ENCODE measurements at regions of chr19 and their contacts with region 1.

Region 1: GRCh38 chr19:21505459-21506451 is at the start of gene ZNF429:
- DNase-seq: peak; percentile 68 to 96 (median 90)
- ATAC-seq: peak; percentile 99
- H3K4me3 Mint-ChIP-seq: peak within 1 kb of the TSS; percentile 99 to 100 (median 100)
- H3K27ac Mint-ChIP-seq: peak within 1 kb of the TSS; percentile 96 to 100 (median 100)
- H3K4me1 Mint-ChIP-seq: peaks cover 10 to 54% (median 43%) of the 10 kb centered on the region in 4 donors
- H3K27me3 Mint-ChIP-seq: no peaks in the 10 kb centered on the region
- polyA plus RNA-seq, gene ZNF429: 23.0 to 37.8 (median 34.9) TPM

Region 2: GRCh38 chr19:21328885-21329605 is 176.7 kb before region 1 on chr19 and contains the start of gene ZNF708:
- POLR2A ChIA-PET with region 1: interaction called, 27 read pairs
- DNase-seq: peak; percentile 51 to 85 (median 70)
- ATAC-seq: peak; percentile 94 to 96
- H3K4me3 Mint-ChIP-seq: peak within 1 kb of the TSS; percentile 97 to 99 (median 99)
- H3K27ac Mint-ChIP-seq: peak within 1 kb of the TSS; percentile 98 to 99 (median 99)
- H3K4me1 Mint-ChIP-seq: peaks cover 16 to 50% (median 38%) of the 10 kb centered on the region in 4 donors
- H3K27me3 Mint-ChIP-seq: no peaks in the 10 kb centered on the region
- polyA plus RNA-seq, gene ZNF708: 11.8 to 15.1 (median 14.0) TPM

Region 3: GRCh38 chr19:21492947-21493906 is 12.5 kb before region 1 on chr19:
- POLR2A ChIA-PET with region 1: no interaction called
- DNase-seq: no peak
- ATAC-seq: no peak
- H3K4me3 Mint-ChIP-seq: no peak overlapping the region
- H3K27ac Mint-ChIP-seq: no peak overlapping the region
- H3K4me1 Mint-ChIP-seq: peaks cover 0 to 4% (median 0%) of the 10 kb centered on the region in 4 donors
- H3K27me3 Mint-ChIP-seq: no peaks in the 10 kb centered on the region

Region 4: GRCh38 chr19:21532904-21533303 is 27.1 kb after region 1 on chr19:
- POLR2A ChIA-PET with region 1: no interaction called
- DNase-seq: no peak
- ATAC-seq: no peak
- H3K4me3 Mint-ChIP-seq: no peak overlapping the region
- H3K27ac Mint-ChIP-seq: no peak overlapping the region
- H3K4me1 Mint-ChIP-seq: peaks cover 0 to 2% (median 0%) of the 10 kb centered on the region in 4 donors
- H3K27me3 Mint-ChIP-seq: no peaks in the 10 kb centered on the region

Region 5: GRCh38 chr19:21568816-21569493 is 63.2 kb after region 1 on chr19:
- POLR2A ChIA-PET with region 1: interaction called, 38 read pairs
- DNase-seq: peak; percentile 54 to 95 (median 86)
- ATAC-seq: peak; percentile 97
- H3K4me3 Mint-ChIP-seq: peak overlapping the region; percentile 91 to 100 (median 96)
- H3K27ac Mint-ChIP-seq: peak overlapping the region; percentile 89 to 100 (median 98)
- H3K4me1 Mint-ChIP-seq: peaks cover 20 to 37% (median 28%) of the 10 kb centered on the region in 4 donors
- H3K27me3 Mint-ChIP-seq: no peaks in the 10 kb centered on the region

Region 6: DNA sequence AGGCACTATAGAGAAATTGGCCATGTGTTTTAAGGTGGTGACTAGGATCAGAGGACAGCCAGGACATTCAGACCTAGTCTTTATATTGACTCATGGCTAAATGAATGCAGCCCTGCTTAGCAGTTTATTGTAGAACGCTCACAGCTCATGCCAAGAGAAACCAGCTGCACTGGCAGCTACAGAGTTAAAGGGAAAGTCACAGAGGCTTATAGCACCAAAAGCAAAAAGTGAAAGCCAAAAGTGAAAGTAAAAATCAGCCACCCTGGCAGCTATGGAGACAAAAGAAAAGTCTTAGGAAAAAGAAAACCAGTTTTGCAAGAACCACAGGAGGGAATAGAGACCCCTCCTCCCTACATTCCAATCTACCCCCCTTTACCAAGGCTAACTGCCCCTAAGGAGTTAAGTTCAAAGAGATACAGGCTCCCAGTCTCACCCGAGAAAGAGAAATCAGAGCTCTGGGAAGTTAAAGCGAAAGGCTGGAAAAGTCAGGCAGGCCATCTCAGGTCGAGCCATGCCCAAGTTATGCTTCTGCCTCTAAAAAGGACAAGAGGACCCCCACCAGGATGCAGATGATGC is 98.7 kb after region 1 on chr19:
- POLR2A ChIA-PET with region 1: interaction called, 19 read pairs
- DNase-seq: peak in 4 of 10 donors; percentile 5 to 50 (median 42)
- ATAC-seq: peak; percentile 83 to 85
- H3K4me3 Mint-ChIP-seq: peak overlapping the region; percentile 87 to 97 (median 91)
- H3K27ac Mint-ChIP-seq: peak overlapping the region; percentile 93 to 97 (median 96)
- H3K4me1 Mint-ChIP-seq: peaks cover 19 to 30% (median 25%) of the 10 kb centered on the region in 4 donors
- H3K27me3 Mint-ChIP-seq: no peaks in the 10 kb centered on the region

Region 7: DNA sequence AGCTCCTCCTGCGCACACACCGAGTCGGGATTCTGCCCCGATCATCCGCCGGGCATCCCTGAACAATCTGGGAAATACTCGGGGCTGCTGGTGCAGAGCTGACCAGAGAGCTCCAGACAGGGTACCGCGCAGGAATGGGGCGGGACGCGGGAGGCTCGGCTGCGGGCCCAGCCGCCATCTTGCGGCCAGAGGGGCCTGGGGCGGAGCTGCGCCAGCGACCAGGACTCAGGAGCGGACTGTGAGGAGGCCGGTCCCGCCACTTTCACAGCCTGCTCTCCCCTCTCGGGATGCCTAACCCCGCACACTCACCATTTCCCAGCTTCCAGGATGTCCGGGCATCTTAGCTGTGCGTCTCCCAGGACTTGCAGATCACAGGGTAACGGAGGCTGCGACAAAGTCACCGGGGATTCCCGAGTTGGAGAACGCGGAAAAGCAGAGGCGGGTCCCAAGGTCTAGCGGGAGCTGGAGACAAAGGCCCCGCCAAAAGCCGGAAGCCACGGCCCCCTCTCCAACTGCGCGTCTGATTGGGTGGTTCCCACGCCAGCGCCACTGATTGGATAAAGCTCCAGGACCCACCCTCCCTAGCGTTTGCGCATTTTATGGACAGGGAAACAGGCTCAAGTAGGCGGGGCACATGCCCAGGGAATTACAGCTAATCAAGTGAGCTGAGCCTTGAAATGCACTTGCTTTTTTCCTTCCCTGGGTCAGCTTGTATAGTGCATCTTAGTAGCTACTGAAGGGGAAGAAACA is 346.0 kb after region 1 on chr19:
- POLR2A ChIA-PET with region 1: interaction called, 16 read pairs
- DNase-seq: peak; percentile 78 to 94 (median 90)
- ATAC-seq: peak; percentile 98 to 99
- H3K4me3 Mint-ChIP-seq: peak overlapping the region; percentile 88 to 97 (median 94)
- H3K27ac Mint-ChIP-seq: peak overlapping the region; percentile 86 to 97 (median 94)
- H3K4me1 Mint-ChIP-seq: peaks cover 7 to 31% (median 30%) of the 10 kb centered on the region in 4 donors
- H3K27me3 Mint-ChIP-seq: no peaks in the 10 kb centered on the region

Measured in naive thymus-derived CD8-positive, alpha-beta T cell (primary cell).